ENCODE measurements at regions of chr6 and their contacts with region 1.

Region 1: GRCh38 chr6:29847871-29848630 is 20.4 kb downstream of the HLA-G start:
- DNase-seq: peak; percentile 58 to 60
- ATAC-seq: peak; percentile 94 to 99
- H3K4me3 ChIP-seq: no peak overlapping the region
- H3K27ac ChIP-seq: no peak overlapping the region
- H3K4me1 ChIP-seq: peaks cover 7% of the 10 kb centered on the region; the same call in 1 of the 3 replicates
- CTCF ChIP-seq: peak; percentile 86
- EP300 ChIP-seq: no peak
- POLR2A ChIP-seq: no peak
- RAD21 ChIP-seq: peak; percentile 97

Region 2: DNA sequence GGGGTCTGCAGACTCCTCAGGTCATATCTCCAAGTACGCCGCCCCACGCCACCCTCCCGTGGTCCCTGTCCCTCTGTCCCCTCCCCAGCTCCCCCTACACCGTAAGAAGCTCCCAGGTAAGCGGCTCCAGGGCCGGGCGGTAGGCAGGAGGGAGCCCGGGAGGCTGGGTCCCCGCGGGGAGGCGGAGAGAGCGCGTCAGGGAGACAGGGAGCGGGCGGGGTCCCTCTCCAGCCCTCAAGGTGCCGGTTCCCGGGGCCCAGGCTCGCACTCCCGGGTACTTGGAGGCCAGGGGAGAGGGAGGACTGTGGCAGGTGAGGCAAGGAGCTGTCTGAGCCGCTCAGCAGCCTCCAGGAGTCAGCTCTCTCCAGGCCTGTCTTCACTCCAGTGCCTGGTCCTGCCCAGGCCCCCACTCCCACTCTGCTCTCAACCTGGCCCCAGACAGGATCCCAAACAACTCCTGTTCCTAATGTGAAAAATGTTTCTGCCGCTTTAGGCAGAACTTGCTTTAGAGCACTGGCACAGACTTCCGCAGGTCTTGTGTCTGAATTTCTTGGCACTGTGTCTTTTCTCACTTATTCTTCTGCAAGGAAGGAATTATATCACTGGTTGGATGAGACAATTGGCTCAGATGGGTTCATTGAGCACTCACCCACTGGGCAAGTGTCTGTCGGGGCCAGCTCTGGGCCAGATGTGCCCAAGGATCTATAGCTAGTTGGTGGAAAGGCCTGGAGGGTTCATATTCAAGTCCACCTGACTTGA is 16.2 kb after region 1 on chr6:
- CTCF ChIA-PET with region 1: interaction called, 26 read pairs
- POLR2A ChIA-PET with region 1: no interaction called
- DNase-seq: no peak
- ATAC-seq: no peak
- H3K4me3 ChIP-seq: no peak overlapping the region
- H3K27ac ChIP-seq: no peak overlapping the region
- H3K4me1 ChIP-seq: no peaks in the 10 kb centered on the region
- CTCF ChIP-seq: no peak
- EP300 ChIP-seq: no peak
- POLR2A ChIP-seq: no peak
- RAD21 ChIP-seq: no peak

Region 3: DNA sequence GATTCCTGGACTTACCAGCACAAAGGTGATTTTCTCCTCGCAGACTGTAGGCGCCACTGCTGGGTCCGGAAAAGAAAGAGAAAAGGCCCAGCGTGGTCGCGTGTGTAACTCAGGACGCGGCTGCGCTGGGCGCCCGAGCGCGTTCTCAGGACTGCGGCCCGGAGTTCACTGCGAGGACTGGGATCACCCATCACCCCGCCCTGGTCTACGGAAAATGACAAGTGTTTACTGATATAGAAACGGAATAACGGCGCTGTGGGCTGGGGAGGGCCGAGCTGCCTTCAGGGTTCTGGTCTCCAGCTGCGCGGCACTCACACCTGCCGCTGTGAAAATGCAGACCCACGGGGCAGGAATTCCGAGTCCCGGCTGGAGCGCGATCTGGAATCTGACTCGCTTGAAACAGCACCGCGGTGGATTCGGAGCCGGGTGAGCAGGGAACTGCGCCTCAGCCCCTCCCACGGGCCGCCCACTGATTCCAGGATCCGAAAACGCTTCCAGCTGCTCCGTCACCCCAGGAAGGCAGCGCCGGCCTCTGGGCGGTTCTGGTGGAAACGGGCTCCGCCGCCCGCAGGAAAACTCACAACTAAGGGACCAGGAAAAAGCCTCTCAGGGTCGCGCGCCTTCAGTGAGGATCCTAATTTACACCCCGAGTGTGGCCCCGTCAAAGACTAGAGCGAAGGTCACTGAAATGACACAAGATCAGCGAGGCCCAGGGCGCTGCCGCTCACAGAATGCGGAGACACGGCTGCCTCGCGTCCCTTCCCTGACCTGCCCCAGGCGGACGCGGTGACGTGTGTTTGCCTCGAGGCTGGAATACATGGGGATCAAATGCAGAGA is 128.8 kb after region 1 on chr6:
- CTCF ChIA-PET with region 1: interaction called, 19 read pairs
- POLR2A ChIA-PET with region 1: no interaction called
- DNase-seq: peak; percentile 55 to 79
- ATAC-seq: peak; percentile 92 to 94
- H3K4me3 ChIP-seq: peak overlapping the region; percentile 39
- H3K27ac ChIP-seq: peak overlapping the region; percentile 66 to 80
- H3K4me1 ChIP-seq: peaks cover 5% of the 10 kb centered on the region; the same call in 1 of the 3 replicates
- CTCF ChIP-seq: no peak
- EP300 ChIP-seq: no peak
- POLR2A ChIP-seq: peak; percentile 41
- RAD21 ChIP-seq: peak in 1 of 2 experiments; percentile 14; a peak in 3 of 5 replicates

Region 4: DNA sequence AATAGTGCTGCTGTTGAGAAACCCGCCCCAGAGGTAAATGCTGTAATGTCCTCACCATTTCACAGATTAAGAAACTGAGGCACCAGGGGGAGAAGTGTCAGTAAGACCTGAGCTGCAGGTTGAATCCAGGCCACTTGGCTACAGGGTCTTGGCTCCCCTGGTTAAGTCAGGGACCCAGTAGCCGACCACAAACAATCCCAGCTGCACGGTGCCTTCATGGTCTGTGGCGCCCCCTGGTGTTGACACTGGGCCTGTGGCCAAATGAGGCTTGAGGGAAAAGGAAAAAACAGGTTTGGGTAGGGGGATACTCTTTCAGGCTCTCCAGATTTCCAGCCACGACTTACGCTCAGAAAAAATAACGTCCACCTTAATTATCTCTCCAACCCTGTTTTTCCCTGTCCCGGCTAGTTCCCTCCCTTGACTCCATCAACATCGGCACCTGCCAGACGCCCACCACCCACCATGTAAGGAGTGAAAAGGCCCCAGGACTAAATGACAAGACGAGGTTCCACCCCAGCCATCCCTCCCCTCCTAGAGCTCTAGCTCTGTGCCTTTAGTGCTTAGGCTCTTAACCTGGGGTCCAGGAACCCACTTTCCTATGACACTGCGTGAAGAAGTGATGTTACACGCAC is 165.4 kb after region 1 on chr6:
- CTCF ChIA-PET with region 1: interaction called, 30 read pairs
- POLR2A ChIA-PET with region 1: no interaction called
- DNase-seq: peak in 1 of 2 experiments; percentile 3
- ATAC-seq: peak in 1 of 2 experiments; percentile 69; a peak in 3 of 6 replicates
- H3K4me3 ChIP-seq: no peak overlapping the region
- H3K27ac ChIP-seq: no peak overlapping the region
- H3K4me1 ChIP-seq: no peaks in the 10 kb centered on the region
- CTCF ChIP-seq: peak; percentile 52
- EP300 ChIP-seq: no peak
- POLR2A ChIP-seq: no peak
- RAD21 ChIP-seq: peak; percentile 59 to 73

Measured in A549 (cell line).